Activated T-helper 2 cell treated with anti-CD3 and anti-CD28 coated beads, Interferon-gamma antibody, Interleukin-2, Interleukin-4, amounts not matched to agents 10 μg/mL and 5 μg/mL and 100 μg/mL, durations not matched to agents 14 hours and 24 hours and 36 hours (primary cell): ENCODE measurements at regions of chr1 and their contacts with region 1.

Region 1: GRCh38 chr1:153977250-153978240 is at the start of gene JTB:
- DNase-seq: peak; percentile 78
- H3K4me3 Mint-ChIP-seq: peak within 1 kb of the TSS; percentile 97
- H3K27ac Mint-ChIP-seq: peak within 1 kb of the TSS; percentile 97
- H3K4me1 Mint-ChIP-seq: peaks cover 27% of the 10 kb centered on the region
- H3K27me3 Mint-ChIP-seq: no peaks in the 10 kb centered on the region
- total RNA-seq, gene JTB: 148 and 152 TPM in 2 replicates

Region 2: DNA sequence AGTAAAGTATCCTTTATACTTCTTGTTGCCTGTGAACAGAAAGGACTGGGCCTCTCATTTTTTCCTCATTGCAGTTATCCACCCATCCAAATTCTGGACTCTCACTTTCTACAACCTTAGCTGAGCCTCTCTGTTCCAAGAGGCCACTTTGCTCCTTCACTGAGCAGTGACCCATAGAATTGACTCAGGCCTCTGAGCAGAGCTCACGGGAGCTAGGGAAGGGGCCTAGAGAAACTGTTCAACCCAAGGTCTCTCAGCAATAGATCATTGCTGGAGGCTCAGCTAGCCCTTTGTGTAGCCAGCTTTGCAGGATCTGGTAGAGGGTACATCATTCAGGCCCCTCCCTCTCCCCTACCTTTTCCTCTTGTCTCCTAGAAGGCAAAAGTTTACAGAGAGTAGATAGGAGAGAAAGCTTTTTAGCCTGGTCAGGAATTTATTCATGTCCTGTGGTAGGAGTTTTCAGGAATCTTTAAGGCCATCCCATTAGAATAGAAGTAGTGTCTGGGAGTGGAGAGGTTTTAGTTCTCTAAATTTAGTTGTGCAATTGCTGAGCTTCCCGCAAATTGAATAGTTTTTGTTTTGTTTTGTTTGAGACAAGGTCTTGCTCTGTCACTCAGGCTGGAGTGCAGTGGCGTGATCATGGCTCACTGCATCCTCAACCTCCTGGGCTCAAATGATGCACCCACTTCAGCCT is 243.0 kb before region 1 on chr1:
- intact Hi-C with region 1: no loop called
- DNase-seq: no peak
- H3K4me3 Mint-ChIP-seq: no peak overlapping the region
- H3K27ac Mint-ChIP-seq: no peak overlapping the region
- H3K4me1 Mint-ChIP-seq: peaks cover 24% of the 10 kb centered on the region
- H3K27me3 Mint-ChIP-seq: no peaks in the 10 kb centered on the region

Region 3: DNA sequence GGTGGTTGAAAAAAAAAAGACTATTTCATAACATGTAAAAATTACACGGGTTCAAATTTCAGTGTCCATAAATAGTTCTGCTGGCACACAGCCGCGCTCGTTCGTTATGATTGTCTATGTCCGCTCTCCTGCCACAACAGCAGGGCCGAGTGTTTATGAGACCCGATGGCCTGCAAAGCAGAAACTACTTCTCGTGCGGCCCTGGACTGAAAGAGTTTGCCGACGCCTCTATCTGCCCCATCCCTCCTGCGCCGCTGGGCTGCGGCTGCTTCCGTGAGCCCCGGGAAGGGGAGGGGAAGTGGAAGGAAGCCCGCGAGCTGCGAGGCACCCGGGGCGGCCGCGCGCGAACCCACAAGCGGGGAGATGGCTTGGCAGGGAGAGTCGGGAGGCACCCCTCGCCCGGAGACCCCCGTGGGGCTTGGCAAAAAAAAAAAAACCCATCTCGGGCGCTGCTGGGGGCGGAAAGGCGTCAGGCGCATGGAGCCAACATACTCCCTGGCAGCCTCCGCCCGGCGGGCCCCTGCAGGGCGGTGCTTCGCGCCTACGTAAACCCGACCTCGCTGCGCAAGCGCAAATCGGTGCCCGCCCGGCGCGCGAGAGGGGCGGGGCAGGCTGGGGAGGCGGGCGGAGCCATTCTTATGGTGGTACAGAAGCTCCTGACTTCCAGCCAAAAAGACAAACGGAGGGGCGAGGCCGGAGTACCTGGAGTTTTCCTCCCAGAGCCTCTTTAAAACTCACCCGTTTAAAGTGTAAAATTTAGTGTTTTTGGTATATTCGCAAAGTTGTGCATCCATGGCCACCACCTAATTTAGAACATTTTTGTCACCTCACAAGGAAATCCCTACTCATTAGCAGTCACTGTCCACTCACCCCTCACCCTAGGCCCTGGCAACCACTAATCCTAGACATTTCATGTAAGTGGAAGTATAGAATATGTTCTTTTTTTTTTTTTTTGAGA is 194.0 kb before region 1 on chr1:
- intact Hi-C with region 1: loop called (anchors 1 kb)
- DNase-seq: peak; percentile 89
- H3K4me3 Mint-ChIP-seq: peak overlapping the region; percentile 89
- H3K27ac Mint-ChIP-seq: peak overlapping the region; percentile 96
- H3K4me1 Mint-ChIP-seq: peaks cover 4% of the 10 kb centered on the region
- H3K27me3 Mint-ChIP-seq: no peaks in the 10 kb centered on the region

Region 4: GRCh38 chr1:153967082-153968000 is 10.2 kb before region 1 on chr1 and contains the start of gene CREB3L4:
- intact Hi-C with region 1: loop called (anchors 1 kb)
- DNase-seq: peak; percentile 84
- H3K4me3 Mint-ChIP-seq: peak within 1 kb of the TSS; percentile 86
- H3K27ac Mint-ChIP-seq: peak within 1 kb of the TSS; percentile 98
- H3K4me1 Mint-ChIP-seq: peaks cover 47% of the 10 kb centered on the region
- H3K27me3 Mint-ChIP-seq: no peaks in the 10 kb centered on the region
- total RNA-seq, gene CREB3L4: 12.5 TPM in 2 replicates

Region 5: DNA sequence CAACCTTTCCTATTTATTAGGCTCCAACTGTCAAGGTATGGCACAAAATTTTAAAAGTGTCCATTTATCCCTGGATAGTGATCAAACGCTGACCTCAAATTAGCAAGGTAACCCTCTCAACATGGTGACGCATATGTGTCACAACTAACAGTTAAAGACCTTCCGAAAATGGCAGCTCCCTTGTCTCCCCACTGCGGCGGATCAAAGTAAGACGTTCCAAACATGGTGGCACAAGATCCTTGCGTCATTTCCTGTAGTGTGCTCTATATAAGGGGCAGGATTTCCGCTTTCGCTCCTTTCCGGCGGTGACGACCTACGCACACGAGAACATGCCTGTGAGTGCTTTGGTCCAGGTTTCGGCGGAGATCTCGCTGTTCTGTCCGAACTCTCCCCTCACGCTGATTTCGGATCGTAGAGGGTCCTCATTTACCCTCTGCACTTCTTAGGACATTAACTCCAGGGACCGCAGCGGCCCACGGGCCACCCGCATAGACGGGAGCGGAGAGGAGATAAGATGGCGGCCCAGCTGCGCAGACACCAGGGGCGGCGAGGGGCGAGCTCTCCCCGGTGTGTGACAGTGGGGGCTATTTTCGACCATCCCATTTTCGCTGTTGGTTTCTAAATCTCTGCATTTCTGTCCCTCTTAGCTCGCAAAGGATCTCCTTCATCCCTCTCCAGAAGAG is 13.1 kb after region 1 on chr1 and contains the start of gene RPS27:
- intact Hi-C with region 1: loop called (anchors 2 kb)
- DNase-seq: peak; percentile 88
- H3K4me3 Mint-ChIP-seq: peak within 1 kb of the TSS; percentile 88
- H3K27ac Mint-ChIP-seq: peak within 1 kb of the TSS; percentile 92
- H3K4me1 Mint-ChIP-seq: peaks cover 39% of the 10 kb centered on the region
- H3K27me3 Mint-ChIP-seq: no peaks in the 10 kb centered on the region
- total RNA-seq, gene RPS27: 1,296 and 1,372 TPM in 2 replicates